Tibial artery (tissue), 4 donors: ENCODE measurements at regions of chr11 and their contacts with region 1.

Region 1: GRCh38 chr11:63738720-63739360 is 29.7 kb downstream of the ZFTA start:
- DNase-seq: peak; percentile 76 to 92
- H3K4me3 ChIP-seq: no peak overlapping the region
- H3K27ac ChIP-seq: peak overlapping the region in 1 of 2 donors; percentile 10
- H3K4me1 ChIP-seq: peaks cover 0 to 4% (median 0%) of the 10 kb centered on the region in 4 donors
- H3K27me3 ChIP-seq: no peaks in the 10 kb centered on the region
- CTCF ChIP-seq: peak; percentile 71 to 95

Region 2: DNA sequence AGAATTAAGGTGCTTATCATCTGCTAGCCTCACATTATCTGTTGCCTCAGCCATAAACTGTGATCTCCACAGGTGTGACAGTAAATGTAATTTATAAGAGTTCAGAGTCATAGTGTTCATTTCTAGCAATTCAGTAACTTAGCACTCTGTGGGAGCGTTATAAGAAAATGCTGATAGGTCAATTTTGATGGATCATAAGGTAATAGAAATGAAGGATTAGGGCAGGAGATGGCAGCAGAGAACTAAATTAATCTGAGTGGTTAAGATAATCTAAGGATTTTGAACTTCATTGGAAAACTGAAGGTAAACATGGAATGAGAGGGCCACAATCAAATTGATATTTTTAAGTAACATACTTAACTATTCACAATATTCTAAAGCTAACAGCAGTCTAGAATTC is 395.7 kb before region 1 on chr11:
- intact Hi-C with region 1: no loop called
- DNase-seq: no peak
- H3K4me3 ChIP-seq: no peak overlapping the region
- H3K27ac ChIP-seq: no peak overlapping the region
- H3K4me1 ChIP-seq: no peaks in the 10 kb centered on the region
- H3K27me3 ChIP-seq: no peaks in the 10 kb centered on the region
- CTCF ChIP-seq: no peak

Region 3: DNA sequence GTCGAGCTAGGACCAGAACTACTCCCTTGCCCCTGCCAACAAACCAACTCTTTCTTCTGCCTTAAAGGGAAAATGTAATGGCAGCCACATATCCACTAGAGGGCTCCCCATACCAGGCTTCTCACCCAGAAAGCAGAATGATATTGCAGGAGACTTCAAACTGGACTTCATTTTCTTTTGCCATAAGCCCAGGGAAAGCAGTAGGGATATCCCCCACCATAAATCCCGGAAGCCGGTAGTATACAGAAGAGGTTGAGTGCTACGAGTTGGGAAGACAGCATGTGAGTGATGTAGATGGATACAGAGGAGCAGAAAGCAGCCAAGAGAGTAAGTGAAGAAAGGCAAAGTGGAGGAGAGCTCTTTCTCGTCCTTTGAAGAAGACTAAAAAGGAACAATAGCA is 259.9 kb before region 1 on chr11:
- intact Hi-C with region 1: loop called (anchors 5 kb)
- DNase-seq: peak in 1 of 2 donors; percentile 31
- H3K4me3 ChIP-seq: no peak overlapping the region
- H3K27ac ChIP-seq: peak overlapping the region in 1 of 2 donors; percentile 4
- H3K4me1 ChIP-seq: peaks cover 0 to 8% (median 0%) of the 10 kb centered on the region in 4 donors
- H3K27me3 ChIP-seq: no peaks in the 10 kb centered on the region
- CTCF ChIP-seq: peak; percentile 83 to 92

Region 4: DNA sequence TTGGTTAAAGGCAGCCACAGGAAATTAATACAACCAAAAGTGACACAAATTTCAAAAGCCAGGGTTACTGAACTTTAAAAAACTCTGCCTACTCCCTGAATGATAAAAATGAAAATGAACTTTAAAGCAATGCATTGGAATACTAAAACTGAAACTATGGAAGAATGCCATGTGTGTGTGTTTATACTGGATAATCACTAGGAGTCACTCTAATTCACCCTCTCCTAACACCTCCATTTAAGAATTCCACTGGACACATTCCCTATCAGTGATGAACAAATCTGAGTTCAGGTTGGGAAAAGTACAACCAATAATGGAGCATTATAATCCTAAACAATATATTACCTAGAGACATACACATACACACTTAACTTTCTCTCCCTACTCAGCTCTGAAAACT is 97.1 kb before region 1 on chr11:
- intact Hi-C with region 1: loop called (anchors 10 kb)
- DNase-seq: no peak
- H3K4me3 ChIP-seq: no peak overlapping the region
- H3K27ac ChIP-seq: no peak overlapping the region
- H3K4me1 ChIP-seq: no peaks in the 10 kb centered on the region
- H3K27me3 ChIP-seq: no peaks in the 10 kb centered on the region
- CTCF ChIP-seq: no peak

Region 5: DNA sequence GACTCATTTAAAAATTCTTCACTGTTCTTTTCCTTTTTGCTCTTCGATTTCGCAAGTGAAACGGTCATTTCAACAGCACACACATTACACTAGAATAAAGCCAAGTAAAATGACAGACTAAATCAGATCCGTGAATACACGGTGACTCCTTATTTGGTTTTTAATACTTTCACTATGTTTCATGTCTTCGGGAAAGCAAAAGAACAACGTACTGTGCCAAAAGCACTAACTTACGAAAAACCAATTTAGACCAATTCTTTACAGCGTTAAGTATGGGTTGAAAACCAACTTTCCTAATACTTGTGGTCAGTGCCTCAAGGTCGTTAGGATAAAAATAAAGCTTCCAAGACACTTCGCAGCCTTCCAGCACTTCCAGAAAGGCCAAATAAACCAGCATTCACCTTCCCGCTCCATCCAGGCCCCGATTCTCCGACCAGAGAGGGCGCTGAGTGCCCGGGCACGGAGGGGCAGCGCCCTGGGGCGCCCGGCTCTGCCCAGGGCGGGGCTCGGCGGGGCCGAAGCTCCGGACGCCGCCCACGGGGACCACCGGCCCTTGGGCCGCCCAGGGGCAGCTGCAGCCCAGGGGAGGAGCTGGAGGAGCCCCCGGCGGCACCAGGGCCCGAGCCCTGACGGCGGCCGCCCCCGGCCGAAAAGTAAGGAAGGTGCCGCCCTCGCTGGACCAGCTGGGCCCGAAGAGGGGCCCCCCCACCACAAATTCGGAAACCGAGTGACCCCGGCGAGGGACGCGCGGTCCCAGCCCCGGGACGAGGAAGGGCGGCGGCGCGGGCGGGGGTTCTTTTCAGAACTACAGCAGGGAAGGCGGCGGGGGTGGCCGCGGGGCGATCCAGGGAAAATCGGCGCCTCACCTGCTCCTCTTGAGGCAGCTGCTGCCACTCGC is 68.2 kb before region 1 on chr11:
- intact Hi-C with region 1: no loop called
- DNase-seq: peak; percentile 57 to 81
- H3K4me3 ChIP-seq: peak overlapping the region; percentile 86 to 99
- H3K27ac ChIP-seq: peak overlapping the region; percentile 99 to 100
- H3K4me1 ChIP-seq: peaks cover 10 to 53% (median 41%) of the 10 kb centered on the region in 4 donors
- H3K27me3 ChIP-seq: no peaks in the 10 kb centered on the region
- CTCF ChIP-seq: peak in 1 of 2 experiments; percentile 35

Region 6: DNA sequence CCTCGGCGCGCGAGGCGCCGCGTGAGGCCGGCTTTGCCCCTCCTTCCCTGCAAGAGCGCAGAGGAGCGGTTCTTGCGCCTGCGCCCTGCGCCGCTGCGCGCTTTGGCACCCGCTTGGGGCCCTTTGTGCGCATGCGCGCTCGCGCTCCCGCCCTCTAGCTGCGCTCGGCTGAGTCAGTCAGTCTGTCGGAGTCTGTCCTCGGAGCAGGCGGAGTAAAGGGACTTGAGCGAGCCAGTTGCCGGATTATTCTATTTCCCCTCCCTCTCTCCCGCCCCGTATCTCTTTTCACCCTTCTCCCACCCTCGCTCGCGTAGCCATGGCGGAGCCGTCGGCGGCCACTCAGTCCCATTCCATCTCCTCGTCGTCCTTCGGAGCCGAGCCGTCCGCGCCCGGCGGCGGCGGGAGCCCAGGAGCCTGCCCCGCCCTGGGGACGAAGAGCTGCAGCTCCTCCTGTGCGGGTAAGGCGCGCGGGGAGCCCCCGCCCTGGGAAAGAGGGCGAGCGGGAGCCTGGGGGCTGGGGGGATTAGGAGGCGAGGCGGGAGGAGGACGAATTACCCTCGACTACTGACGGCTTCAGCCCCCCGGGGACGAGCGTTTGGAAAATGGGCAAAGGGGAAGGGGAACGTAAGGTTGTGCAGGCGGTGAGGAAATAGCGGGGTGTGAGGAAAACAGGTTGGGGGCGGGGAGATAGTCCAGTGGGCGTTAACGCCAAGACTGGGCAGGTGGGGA is 57.4 kb before region 1 on chr11 and contains the start of gene RTN3:
- intact Hi-C with region 1: loop called (anchors 10 kb)
- DNase-seq: peak; percentile 95 to 99
- H3K4me3 ChIP-seq: peak within 1 kb of the TSS; percentile 84 to 97
- H3K27ac ChIP-seq: peak within 1 kb of the TSS; percentile 97 to 98
- H3K4me1 ChIP-seq: peaks cover 0 to 40% (median 18%) of the 10 kb centered on the region in 4 donors
- H3K27me3 ChIP-seq: no peaks in the 10 kb centered on the region
- CTCF ChIP-seq: peak in 1 of 2 experiments; percentile 12

Region 7: GRCh38 chr11:63813035-63813562 is 74.3 kb after region 1 on chr11 and contains the start of gene SPINDOC:
- intact Hi-C with region 1: no loop called
- DNase-seq: peak; percentile 69 to 90
- H3K4me3 ChIP-seq: peak within 1 kb of the TSS; percentile 73 to 78
- H3K27ac ChIP-seq: peak within 1 kb of the TSS; percentile 71 to 80
- H3K4me1 ChIP-seq: peaks cover 0 to 32% (median 19%) of the 10 kb centered on the region in 4 donors
- H3K27me3 ChIP-seq: no peaks in the 10 kb centered on the region
- CTCF ChIP-seq: peak in 1 of 2 experiments; percentile 5